Mammary epithelial cell (primary cell): ENCODE measurements at regions of chr3 and their contacts with region 1.

Region 1: GRCh38 chr3:88713233-88713691 is 394.2 kb upstream of the EPHA3 start:
- DNase-seq: peak; percentile 98
- H3K4me3 ChIP-seq: no peak overlapping the region
- H3K27ac ChIP-seq: peak overlapping the region; percentile 60
- H3K4me1 ChIP-seq: peaks cover 8% of the 10 kb centered on the region
- H3K27me3 ChIP-seq: no peaks in the 10 kb centered on the region
- CTCF ChIP-seq: no peak

Region 2: GRCh38 chr3:88626456-88627120 is 86.7 kb before region 1 on chr3:
- CTCF ChIA-PET with region 1: no interaction called
- dilution Hi-C with region 1: no loop called
- in situ Hi-C with region 1: no loop called
- intact Hi-C with region 1: no loop called
- DNase-seq: no peak
- H3K4me3 ChIP-seq: no peak overlapping the region
- H3K27ac ChIP-seq: no peak overlapping the region
- H3K4me1 ChIP-seq: no peaks in the 10 kb centered on the region
- H3K27me3 ChIP-seq: no peaks in the 10 kb centered on the region
- CTCF ChIP-seq: no peak

Region 3: GRCh38 chr3:88807491-88808100 is 94.3 kb after region 1 on chr3:
- CTCF ChIA-PET with region 1: no interaction called
- dilution Hi-C with region 1: no loop called
- in situ Hi-C with region 1: no loop called
- intact Hi-C with region 1: loop called (anchors 5 kb)
- DNase-seq: peak; percentile 72
- H3K4me3 ChIP-seq: no peak overlapping the region
- H3K27ac ChIP-seq: peak overlapping the region; percentile 41
- H3K4me1 ChIP-seq: peaks cover 26% of the 10 kb centered on the region
- H3K27me3 ChIP-seq: no peaks in the 10 kb centered on the region
- CTCF ChIP-seq: no peak

Region 4: DNA sequence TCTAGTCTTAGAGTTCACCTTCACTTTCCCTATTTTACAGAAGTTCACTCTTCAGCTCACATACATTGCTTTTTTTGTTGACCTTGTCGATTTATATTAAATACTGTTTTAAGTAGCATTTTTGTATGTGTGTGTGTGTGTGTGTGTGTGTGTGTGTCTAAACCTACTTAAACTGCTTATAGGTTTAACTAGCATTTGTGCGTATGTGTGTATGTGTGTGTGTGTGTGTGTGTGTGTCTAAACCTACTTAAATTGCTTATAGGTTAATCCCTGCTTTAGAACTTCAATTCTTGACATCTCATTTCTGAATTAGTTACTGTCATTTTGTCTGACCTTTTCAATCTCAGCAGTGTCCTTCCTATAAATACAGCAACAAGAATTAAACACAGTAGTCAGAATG is 139.3 kb after region 1 on chr3:
- CTCF ChIA-PET with region 1: no interaction called
- dilution Hi-C with region 1: no loop called
- in situ Hi-C with region 1: no loop called
- intact Hi-C with region 1: no loop called
- DNase-seq: no peak
- H3K4me3 ChIP-seq: no peak overlapping the region
- H3K27ac ChIP-seq: no peak overlapping the region
- H3K4me1 ChIP-seq: no peaks in the 10 kb centered on the region
- H3K27me3 ChIP-seq: no peaks in the 10 kb centered on the region
- CTCF ChIP-seq: no peak

Region 5: DNA sequence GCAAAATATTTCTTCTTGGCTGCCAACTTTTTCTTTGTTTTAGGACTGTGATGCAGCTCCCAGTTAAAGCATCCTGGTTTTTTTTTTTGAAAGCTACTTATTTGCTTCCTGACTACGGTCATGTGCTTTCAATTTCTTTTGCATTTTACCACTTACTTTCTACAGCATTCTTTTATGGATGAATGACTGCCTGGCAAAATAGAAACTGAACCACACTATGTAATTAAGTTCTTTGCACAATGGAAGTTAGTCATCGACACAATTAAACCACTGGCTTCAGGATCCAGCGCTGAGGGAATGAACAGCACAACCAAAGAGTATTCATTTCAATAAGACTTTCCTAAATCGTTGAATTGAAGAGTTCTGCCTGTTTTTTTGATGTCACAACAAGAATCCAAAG is 311.9 kb after region 1 on chr3:
- CTCF ChIA-PET with region 1: no interaction called
- dilution Hi-C with region 1: no loop called
- in situ Hi-C with region 1: no loop called
- intact Hi-C with region 1: loop called (anchors 10 kb)
- DNase-seq: peak; percentile 81
- H3K4me3 ChIP-seq: no peak overlapping the region
- H3K27ac ChIP-seq: peak overlapping the region; percentile 26
- H3K4me1 ChIP-seq: peaks cover 11% of the 10 kb centered on the region
- H3K27me3 ChIP-seq: no peaks in the 10 kb centered on the region
- CTCF ChIP-seq: no peak